ENCODE measurements at regions of chr1 and their contacts with region 1.

Region 1: GRCh38 chr1:23691499-23692307 is at the start of gene RPL11:
- DNase-seq: peak; percentile 92 to 98 (median 94)
- ATAC-seq: peak; percentile 97
- H3K4me3 ChIP-seq: peak within 1 kb of the TSS; percentile 85
- H3K27ac ChIP-seq: peak within 1 kb of the TSS; percentile 88
- H3K4me1 ChIP-seq: peaks cover 14 to 36% of the 10 kb centered on the region in 2 experiments; a peak in 4 of 5 replicates
- H3K27me3 ChIP-seq: no peaks in the 10 kb centered on the region
- CTCF ChIP-seq: peak; percentile 85 to 93 (median 92)
- EP300 ChIP-seq: peak; percentile 57
- POLR2A ChIP-seq: peak; percentile 99
- RAD21 ChIP-seq: no peak; a peak in 1 of 4 replicates
- polyA plus RNA-seq, gene RPL11: 2,542 to 2,758 TPM

Region 2: GRCh38 chr1:21734526-21734925 is 1957.2 kb before region 1 on chr1:
- CTCF ChIA-PET with region 1: no interaction called
- POLR2A ChIA-PET with region 1: no interaction called
- in situ Hi-C with region 1: no loop called
- intact Hi-C with region 1: no loop called
- DNase-seq: no peak
- ATAC-seq: no peak
- H3K4me3 ChIP-seq: no peak overlapping the region
- H3K27ac ChIP-seq: no peak overlapping the region
- H3K4me1 ChIP-seq: no peaks in the 10 kb centered on the region
- H3K27me3 ChIP-seq: no peaks in the 10 kb centered on the region
- CTCF ChIP-seq: no peak
- EP300 ChIP-seq: no peak
- POLR2A ChIP-seq: no peak
- RAD21 ChIP-seq: no peak

Region 3: DNA sequence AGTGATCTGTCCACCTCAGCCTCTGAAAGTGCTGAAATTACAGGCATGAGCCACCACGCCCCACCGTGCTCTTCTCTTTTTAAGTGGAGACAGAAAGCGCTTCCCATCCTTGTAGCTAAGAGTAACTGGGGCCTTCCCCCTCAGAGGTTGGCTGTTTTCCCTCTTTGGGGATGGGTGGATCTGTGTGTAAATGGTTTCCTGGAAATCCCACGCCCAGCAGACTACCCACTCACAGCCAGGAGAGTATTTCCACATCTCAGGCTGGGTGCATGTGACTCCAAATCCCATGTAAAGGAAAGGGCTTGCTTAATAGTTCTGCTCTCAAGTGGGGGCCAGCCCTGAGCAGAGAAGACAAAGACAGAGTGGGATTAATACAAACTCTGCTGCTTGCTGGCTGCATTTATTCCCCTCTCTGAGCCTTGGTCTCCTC is 247.6 kb before region 1 on chr1:
- CTCF ChIA-PET with region 1: no interaction called
- POLR2A ChIA-PET with region 1: no interaction called
- in situ Hi-C with region 1: no loop called
- intact Hi-C with region 1: no loop called
- DNase-seq: peak in 1 of 4 experiments; percentile 37
- ATAC-seq: peak; percentile 40
- H3K4me3 ChIP-seq: no peak overlapping the region
- H3K27ac ChIP-seq: no peak overlapping the region
- H3K4me1 ChIP-seq: peaks cover 3 to 13% of the 10 kb centered on the region in 2 experiments
- H3K27me3 ChIP-seq: no peaks in the 10 kb centered on the region
- CTCF ChIP-seq: no peak
- EP300 ChIP-seq: no peak
- POLR2A ChIP-seq: no peak
- RAD21 ChIP-seq: no peak

Region 4: GRCh38 chr1:23530747-23531561 is 160.7 kb before region 1 on chr1 and contains the start of gene E2F2:
- CTCF ChIA-PET with region 1: no interaction called
- POLR2A ChIA-PET with region 1: interaction called, 16 read pairs
- in situ Hi-C with region 1: no loop called
- intact Hi-C with region 1: no loop called
- DNase-seq: peak; percentile 97 to 98 (median 97)
- ATAC-seq: peak; percentile 79
- H3K4me3 ChIP-seq: peak within 1 kb of the TSS; percentile 55
- H3K27ac ChIP-seq: peak within 1 kb of the TSS; percentile 88
- H3K4me1 ChIP-seq: peaks cover 49 to 50% of the 10 kb centered on the region in 2 experiments
- H3K27me3 ChIP-seq: no peaks in the 10 kb centered on the region
- CTCF ChIP-seq: peak; percentile 26 to 63 (median 50); a peak in 4 of 6 replicates
- EP300 ChIP-seq: 0 out of 2 replicates have a peak, but pooled peaks have one; percentile 14
- POLR2A ChIP-seq: peak; percentile 77
- RAD21 ChIP-seq: no peak
- polyA plus RNA-seq, gene E2F2: 3.8 to 4.0 TPM

Region 5: DNA sequence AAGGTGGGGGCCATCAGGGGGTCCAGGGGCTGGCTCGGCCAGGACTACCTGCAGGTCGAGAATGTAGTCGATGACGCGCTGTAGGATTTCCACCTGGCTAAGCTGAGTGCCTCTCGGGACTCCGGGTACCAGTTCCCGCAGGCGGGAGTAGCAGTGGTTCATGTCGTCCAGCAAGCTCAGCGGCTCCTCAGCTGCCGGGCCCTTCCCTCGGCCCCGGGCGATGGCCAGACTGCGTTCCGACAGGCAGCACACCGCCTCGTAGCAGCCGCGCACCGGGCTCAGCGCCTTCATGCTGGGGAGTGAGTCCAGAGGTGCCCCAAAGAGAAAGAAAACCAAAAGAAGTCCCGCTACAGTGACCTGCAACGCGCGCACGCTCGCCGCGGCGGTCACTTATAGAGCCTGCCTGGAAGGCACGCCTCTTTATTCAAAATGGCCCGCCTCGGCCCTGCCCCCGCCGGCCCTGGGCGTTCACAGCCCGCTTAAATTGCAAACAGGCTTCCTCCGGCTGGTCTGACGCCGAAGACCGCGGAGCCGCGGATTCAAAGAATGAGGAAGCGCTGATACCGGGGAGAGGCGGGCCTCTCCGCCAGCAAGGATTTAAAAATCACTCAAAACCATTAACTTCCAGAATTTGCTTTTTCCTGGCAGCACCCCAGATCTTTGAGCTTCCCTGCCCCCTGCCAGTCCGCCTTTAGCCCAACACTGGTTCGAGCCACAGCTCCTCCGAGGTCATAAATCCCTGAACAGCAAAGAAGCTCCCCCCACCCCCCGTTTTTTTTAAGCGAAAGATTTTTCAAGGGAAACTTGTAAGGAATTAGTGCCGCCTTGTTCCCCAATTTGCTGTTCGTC is 132.3 kb before region 1 on chr1 and contains the start of gene ID3:
- CTCF ChIA-PET with region 1: no interaction called
- POLR2A ChIA-PET with region 1: interaction called, 11 read pairs
- in situ Hi-C with region 1: no loop called
- intact Hi-C with region 1: no loop called
- DNase-seq: peak; percentile 76 to 98 (median 84)
- ATAC-seq: peak; percentile 70
- H3K4me3 ChIP-seq: peak within 1 kb of the TSS; percentile 74
- H3K27ac ChIP-seq: peak within 1 kb of the TSS; percentile 80
- H3K4me1 ChIP-seq: peaks cover 60 to 71% of the 10 kb centered on the region in 2 experiments
- H3K27me3 ChIP-seq: no peaks in the 10 kb centered on the region
- CTCF ChIP-seq: no peak; a peak in 1 of 6 replicates
- EP300 ChIP-seq: peak; percentile 38
- POLR2A ChIP-seq: peak; percentile 99
- RAD21 ChIP-seq: no peak
- polyA plus RNA-seq, gene ID3: 6.8 to 13.2 TPM

Region 6: DNA sequence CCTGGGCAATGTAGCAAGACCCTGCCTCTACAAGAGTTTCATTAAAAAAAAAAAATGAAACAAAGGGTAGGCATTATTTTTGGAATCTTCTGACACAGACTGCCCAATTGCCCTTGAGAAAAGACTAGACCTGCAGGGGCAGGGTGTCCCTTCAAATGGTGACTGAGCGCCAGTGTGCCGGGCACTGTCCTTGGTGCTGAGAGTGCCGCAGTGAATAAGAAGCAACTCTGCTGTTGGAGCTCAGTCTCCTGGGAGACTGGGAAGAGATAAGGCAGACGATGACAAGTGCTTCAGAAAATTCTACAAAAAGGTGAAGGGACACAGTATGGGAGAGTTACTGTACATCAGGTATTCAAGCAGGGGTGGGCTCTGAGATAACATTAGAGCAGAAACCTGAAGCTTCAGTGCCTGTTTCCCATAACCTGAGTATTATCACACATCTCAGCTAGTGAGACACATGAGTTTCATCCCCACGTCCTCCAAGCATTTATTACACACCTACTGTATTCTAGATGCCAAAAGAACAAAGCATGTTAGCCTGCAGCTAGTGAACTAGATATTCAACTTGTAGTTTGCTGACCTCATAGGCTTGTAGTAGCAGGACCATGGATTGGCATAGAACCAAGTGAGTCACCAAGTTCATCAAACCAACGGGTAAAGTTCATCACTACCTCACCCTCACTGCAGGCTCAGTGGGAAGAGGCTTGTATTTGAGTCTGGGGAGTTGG is 18.5 kb before region 1 on chr1:
- CTCF ChIA-PET with region 1: no interaction called
- POLR2A ChIA-PET with region 1: interaction called, 15 read pairs
- in situ Hi-C with region 1: no loop called
- intact Hi-C with region 1: no loop called
- DNase-seq: peak; percentile 66 to 79 (median 72)
- ATAC-seq: peak; percentile 97
- H3K4me3 ChIP-seq: no peak overlapping the region
- H3K27ac ChIP-seq: no peak overlapping the region
- H3K4me1 ChIP-seq: no peaks in the 10 kb centered on the region
- H3K27me3 ChIP-seq: peaks cover 8 to 32% of the 10 kb centered on the region in 2 experiments; a peak in 4 of 5 replicates
- CTCF ChIP-seq: peak in 2 of 3 experiments; percentile 24 to 32; a peak in 3 of 6 replicates
- EP300 ChIP-seq: no peak
- POLR2A ChIP-seq: no peak
- RAD21 ChIP-seq: peak in 1 of 2 experiments; percentile 44; a peak in 1 of 4 replicates

Region 7: GRCh38 chr1:23704834-23705495 is 13.3 kb after region 1 on chr1:
- CTCF ChIA-PET with region 1: no interaction called
- POLR2A ChIA-PET with region 1: interaction called, 24 read pairs
- in situ Hi-C with region 1: no loop called
- intact Hi-C with region 1: no loop called
- DNase-seq: no peak
- ATAC-seq: no peak
- H3K4me3 ChIP-seq: no peak overlapping the region
- H3K27ac ChIP-seq: no peak overlapping the region
- H3K4me1 ChIP-seq: peaks cover 0 to 2% of the 10 kb centered on the region in 2 experiments; a peak in 2 of 5 replicates
- H3K27me3 ChIP-seq: no peaks in the 10 kb centered on the region
- CTCF ChIP-seq: no peak
- EP300 ChIP-seq: no peak
- POLR2A ChIP-seq: no peak
- RAD21 ChIP-seq: no peak

Region 8: DNA sequence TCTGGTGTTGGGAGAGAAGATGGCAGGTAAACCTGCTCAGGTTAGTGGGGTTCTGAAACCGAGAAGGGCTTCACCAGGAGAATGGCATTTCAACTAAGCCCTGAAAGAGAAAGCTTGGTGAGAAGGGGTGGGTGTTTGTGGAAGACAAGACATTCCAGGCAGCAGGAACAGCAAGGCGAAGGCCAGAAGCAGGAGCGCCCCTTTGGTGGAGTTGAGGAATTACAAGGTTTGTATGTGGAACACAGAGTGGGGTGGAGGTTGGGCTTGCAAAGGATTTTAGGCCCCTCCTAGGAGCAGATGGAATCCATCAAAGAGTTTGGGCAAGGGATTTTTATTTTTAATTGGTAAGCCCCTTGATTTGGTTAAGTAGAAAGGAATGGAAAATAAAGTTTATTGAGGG is 26.8 kb after region 1 on chr1:
- CTCF ChIA-PET with region 1: no interaction called
- POLR2A ChIA-PET with region 1: interaction called, 11 read pairs
- in situ Hi-C with region 1: no loop called
- intact Hi-C with region 1: no loop called
- DNase-seq: peak; percentile 57 to 76 (median 74)
- ATAC-seq: peak; percentile 91
- H3K4me3 ChIP-seq: no peak overlapping the region
- H3K27ac ChIP-seq: no peak overlapping the region
- H3K4me1 ChIP-seq: peaks cover 13 to 17% of the 10 kb centered on the region in 2 experiments; a peak in 4 of 5 replicates
- H3K27me3 ChIP-seq: no peaks in the 10 kb centered on the region
- CTCF ChIP-seq: peak; percentile 78 to 90 (median 79)
- EP300 ChIP-seq: no peak
- POLR2A ChIP-seq: no peak
- RAD21 ChIP-seq: peak in 1 of 2 experiments; percentile 44; a peak in 2 of 4 replicates

Region 9: GRCh38 chr1:23743287-23744052 is 51.8 kb after region 1 on chr1 and contains the start of gene ELOA:
- CTCF ChIA-PET with region 1: no interaction called
- POLR2A ChIA-PET with region 1: interaction called, 18 read pairs
- in situ Hi-C with region 1: no loop called
- intact Hi-C with region 1: loop called (anchors 1 kb)
- DNase-seq: peak; percentile 89 to 97 (median 95)
- ATAC-seq: peak; percentile 93
- H3K4me3 ChIP-seq: peak within 1 kb of the TSS; percentile 96
- H3K27ac ChIP-seq: peak within 1 kb of the TSS; percentile 87
- H3K4me1 ChIP-seq: peaks cover 23 to 36% of the 10 kb centered on the region in 2 experiments
- H3K27me3 ChIP-seq: no peaks in the 10 kb centered on the region
- CTCF ChIP-seq: no peak
- EP300 ChIP-seq: no peak; the same call in 1 of the 2 replicates
- POLR2A ChIP-seq: peak; percentile 94
- RAD21 ChIP-seq: no peak; a peak in 1 of 4 replicates
- polyA plus RNA-seq, gene ELOA: 31.9 to 53.6 TPM

Measured in K562 (cell line).